GM10248 (cell line): ENCODE measurements at regions of chr18 and their contacts with region 1.

Region 1: DNA sequence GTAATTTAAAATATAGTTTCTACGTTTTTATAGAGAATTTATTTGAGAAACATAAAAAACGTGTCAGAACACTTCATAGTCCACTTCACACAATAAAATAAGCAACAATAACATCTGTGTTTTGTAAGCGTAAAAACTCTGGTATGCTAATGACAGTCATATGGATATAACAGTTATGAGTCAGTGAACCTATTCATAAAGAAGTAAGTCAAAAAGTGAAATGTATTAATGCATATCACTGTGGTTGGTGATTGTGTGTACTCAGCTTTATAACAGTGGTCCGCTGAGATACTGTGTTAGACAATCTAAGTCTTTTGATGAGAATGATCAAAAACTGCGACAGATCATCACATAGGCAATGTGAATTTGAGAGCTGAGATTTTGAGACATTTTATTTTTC is 153.2 kb downstream of the WDR7 start:
- DNase-seq: no peak
- CTCF ChIP-seq: no peak

Region 2: GRCh38 chr18:56314396-56314795 is 490.0 kb before region 1 on chr18:
- CTCF ChIA-PET with region 1: no interaction called
- POLR2A ChIA-PET with region 1: no interaction called
- DNase-seq: no peak
- CTCF ChIP-seq: no peak

Region 3: DNA sequence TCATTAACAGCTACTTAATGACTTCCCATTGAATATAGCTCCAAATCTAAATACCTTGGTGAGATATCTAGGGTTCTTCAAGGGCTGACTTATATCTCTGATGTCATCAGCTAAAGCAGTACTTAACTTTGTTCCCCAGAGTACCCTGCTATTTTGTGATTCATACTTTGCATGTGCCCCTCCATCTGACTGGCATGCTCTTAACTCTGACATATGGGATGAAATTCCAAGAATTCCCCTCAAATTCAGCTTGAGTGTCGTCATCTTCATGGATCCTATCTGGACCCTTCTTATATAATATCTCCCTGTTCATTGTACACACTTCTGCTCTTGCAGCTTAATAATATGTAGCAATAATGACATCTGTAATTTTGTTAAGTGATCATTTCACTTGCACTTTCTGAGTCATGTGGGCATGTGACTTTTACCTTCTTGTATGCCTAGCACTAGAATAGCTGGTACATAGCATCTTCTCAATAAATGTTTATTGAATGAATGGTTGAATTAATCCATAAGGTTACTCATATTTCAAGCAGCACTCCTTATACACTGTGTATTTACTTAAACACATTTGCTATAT is 19.7 kb after region 1 on chr18:
- CTCF ChIA-PET with region 1: interaction called, 10 read pairs
- POLR2A ChIA-PET with region 1: no interaction called
- DNase-seq: no peak
- CTCF ChIP-seq: no peak